Kidney (tissue), 22 donors: ENCODE measurements at regions of chr20 and their contacts with region 1.

Region 1: DNA sequence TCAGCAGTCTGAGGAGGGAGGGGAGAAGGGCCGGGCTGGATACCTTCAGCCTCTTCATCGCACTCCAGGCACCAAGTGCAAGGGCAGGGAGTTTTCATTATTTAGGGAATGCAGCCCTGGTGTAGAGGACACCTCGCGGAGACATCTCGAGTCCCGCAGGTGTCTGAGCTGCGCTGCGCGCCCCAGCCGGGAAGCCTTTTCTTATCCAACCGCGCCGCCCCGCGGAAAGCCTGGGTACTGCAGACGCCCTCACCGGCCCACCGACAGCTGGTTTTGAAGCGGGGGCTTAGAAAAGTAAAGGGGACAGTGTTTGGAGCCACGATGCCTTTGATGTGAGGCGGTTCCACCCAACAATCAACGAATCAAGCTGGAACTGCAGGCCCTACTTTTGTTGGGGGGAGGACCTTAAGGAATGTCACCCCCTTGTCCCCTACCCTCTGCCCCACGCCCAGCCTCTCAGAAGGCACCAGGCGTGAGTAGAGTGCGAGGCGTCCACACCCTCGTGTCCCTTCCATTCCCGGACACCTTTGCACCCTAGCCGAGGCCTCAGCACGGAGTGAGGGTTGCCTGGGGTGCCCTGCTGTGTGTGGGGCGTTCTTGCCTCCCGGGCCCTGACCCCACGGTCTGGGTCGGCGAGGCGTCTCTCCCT is 8.6 kb downstream of the NKX2-2 start:
- DNase-seq: peak; percentile 72 to 87 (median 83)
- H3K4me3 ChIP-seq: peak overlapping the region in 1 of 3 donors; percentile 21
- H3K27ac ChIP-seq: no peak overlapping the region
- H3K4me1 ChIP-seq: peaks cover 0 to 9% (median 0%) of the 10 kb centered on the region in 3 donors
- H3K27me3 ChIP-seq: peaks cover 41% of the 10 kb centered on the region
- CTCF ChIP-seq: peak; percentile 93

Region 2: GRCh38 chr20:20872428-20872827 is 632.9 kb before region 1 on chr20:
- intact Hi-C with region 1: loop called (anchors 10 kb)
- DNase-seq: no peak
- H3K4me3 ChIP-seq: no peak overlapping the region
- H3K27ac ChIP-seq: no peak overlapping the region
- H3K4me1 ChIP-seq: no peaks in the 10 kb centered on the region
- H3K27me3 ChIP-seq: no peaks in the 10 kb centered on the region
- CTCF ChIP-seq: no peak

Region 3: GRCh38 chr20:21235484-21236445 is 269.5 kb before region 1 on chr20:
- intact Hi-C with region 1: loop called (anchors 5 kb)
- DNase-seq: peak in 4 of 5 donors; percentile 51 to 79 (median 66)
- H3K4me3 ChIP-seq: no peak overlapping the region
- H3K27ac ChIP-seq: no peak overlapping the region
- H3K4me1 ChIP-seq: no peaks in the 10 kb centered on the region
- H3K27me3 ChIP-seq: no peaks in the 10 kb centered on the region
- CTCF ChIP-seq: peak; percentile 82